Caco-2 (cell line): ENCODE measurements at regions of chr10 and their contacts with region 1.

Region 1: DNA sequence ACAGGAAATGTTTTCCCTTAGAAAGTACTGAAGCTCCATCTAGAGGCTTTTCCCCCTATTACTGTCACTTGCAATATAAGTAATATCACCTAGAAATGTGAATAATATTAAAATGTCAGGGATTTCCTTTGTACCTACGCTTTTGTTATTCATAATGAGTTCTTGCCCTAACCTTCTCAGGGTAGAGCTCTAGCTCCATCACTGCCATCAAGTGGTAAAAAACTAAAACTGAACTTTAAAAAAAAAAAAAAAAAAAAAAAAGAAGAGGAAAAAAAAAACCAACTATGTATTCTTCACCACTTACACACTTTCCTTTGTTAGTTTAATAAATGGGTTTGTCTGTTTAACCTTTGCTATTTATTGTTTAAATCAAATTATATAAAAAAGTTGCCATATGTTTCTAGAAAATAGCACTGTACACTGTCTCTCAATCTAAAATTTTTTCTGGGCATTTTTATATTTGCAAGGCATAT is 49.9 kb downstream of the DNAJC1 start:
- DNase-seq: peak in 1 of 2 experiments; percentile 28
- H3K4me3 ChIP-seq: no peak overlapping the region
- H3K4me3 Mint-ChIP-seq: no peak overlapping the region
- H3K27ac Mint-ChIP-seq: no peak overlapping the region
- H3K4me1 ChIP-seq: no peaks in the 10 kb centered on the region
- H3K4me1 Mint-ChIP-seq: no peaks in the 10 kb centered on the region
- H3K27me3 ChIP-seq: no peaks in the 10 kb centered on the region
- H3K27me3 Mint-ChIP-seq: no peaks in the 10 kb centered on the region
- CTCF ChIP-seq: peak; percentile 41 to 62

Region 2: DNA sequence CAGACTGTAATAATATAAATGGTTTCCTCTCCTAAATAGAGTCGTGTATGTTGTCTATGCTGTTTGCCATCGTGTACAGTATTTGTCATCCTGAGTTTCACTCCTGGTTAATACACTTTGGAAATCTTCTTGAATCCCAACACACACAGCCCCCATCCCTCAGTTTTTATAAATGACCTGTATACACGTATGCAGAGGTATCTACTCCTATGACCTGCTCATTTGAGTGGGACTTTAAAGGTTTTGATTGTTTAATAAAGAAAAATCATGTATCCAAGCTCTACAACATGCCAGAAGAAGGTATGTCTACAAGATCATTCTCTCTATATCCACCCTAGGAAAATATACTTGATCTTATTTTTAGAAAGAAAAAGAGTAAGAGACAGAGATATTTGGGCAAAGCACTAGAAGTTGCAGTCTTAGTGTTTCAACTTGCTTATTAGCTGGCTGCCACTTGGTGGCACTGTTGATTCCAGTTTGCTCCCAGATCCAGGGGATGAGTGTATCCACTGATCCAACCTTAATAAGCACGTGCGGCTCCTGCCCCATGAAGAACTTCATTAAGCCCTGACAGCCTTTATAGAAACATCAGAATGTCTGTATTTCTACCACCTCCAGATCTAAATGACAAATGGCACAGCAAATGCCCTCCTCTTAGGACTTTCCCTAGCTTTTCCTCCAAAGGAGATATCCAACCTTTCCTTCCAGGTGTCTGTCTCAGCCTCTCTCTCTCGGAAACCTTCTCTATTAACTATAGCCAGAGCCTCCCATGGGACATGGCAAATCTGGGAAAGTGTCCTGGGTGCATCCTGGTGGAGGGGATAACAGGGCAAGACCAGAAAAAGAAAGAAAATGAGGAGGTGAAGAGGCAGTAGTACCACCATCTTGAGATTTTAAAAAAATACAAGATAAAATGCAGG is 875.0 kb before region 1 on chr10:
- CTCF ChIA-PET with region 1: no interaction called
- POLR2A ChIA-PET with region 1: no interaction called
- intact Hi-C with region 1: loop called (anchors 10 kb)
- DNase-seq: peak; percentile 78 to 84
- H3K4me3 ChIP-seq: no peak overlapping the region
- H3K4me3 Mint-ChIP-seq: no peak overlapping the region
- H3K27ac Mint-ChIP-seq: peak overlapping the region; percentile 23
- H3K4me1 ChIP-seq: 0 out of 2 replicates have a peak, but pooled peaks cover 6% of the 10 kb centered on the region
- H3K4me1 Mint-ChIP-seq: peaks cover 15% of the 10 kb centered on the region
- H3K27me3 ChIP-seq: no peaks in the 10 kb centered on the region
- H3K27me3 Mint-ChIP-seq: no peaks in the 10 kb centered on the region
- CTCF ChIP-seq: peak; percentile 92 to 97

Region 3: GRCh38 chr10:21242915-21243314 is 710.7 kb before region 1 on chr10:
- CTCF ChIA-PET with region 1: no interaction called
- POLR2A ChIA-PET with region 1: interaction called, 10 read pairs
- intact Hi-C with region 1: no loop called
- DNase-seq: peak; percentile 62 to 71
- H3K4me3 ChIP-seq: no peak overlapping the region
- H3K4me3 Mint-ChIP-seq: peak overlapping the region; percentile 61
- H3K27ac Mint-ChIP-seq: peak overlapping the region; percentile 84
- H3K4me1 ChIP-seq: peaks cover 19% of the 10 kb centered on the region
- H3K4me1 Mint-ChIP-seq: peaks cover 26% of the 10 kb centered on the region
- H3K27me3 ChIP-seq: no peaks in the 10 kb centered on the region
- H3K27me3 Mint-ChIP-seq: no peaks in the 10 kb centered on the region
- CTCF ChIP-seq: no peak

Region 4: GRCh38 chr10:21516242-21517131 is 437.1 kb before region 1 on chr10:
- CTCF ChIA-PET with region 1: interaction called, 3 read pairs
- POLR2A ChIA-PET with region 1: no interaction called
- intact Hi-C with region 1: loop called (anchors 5 kb)
- DNase-seq: peak; percentile 76 to 85
- H3K4me3 ChIP-seq: peak overlapping the region; percentile 71
- H3K4me3 Mint-ChIP-seq: peak overlapping the region; percentile 92
- H3K27ac Mint-ChIP-seq: peak overlapping the region; percentile 80
- H3K4me1 ChIP-seq: peaks cover 47% of the 10 kb centered on the region
- H3K4me1 Mint-ChIP-seq: peaks cover 59% of the 10 kb centered on the region
- H3K27me3 ChIP-seq: no peaks in the 10 kb centered on the region
- H3K27me3 Mint-ChIP-seq: no peaks in the 10 kb centered on the region
- CTCF ChIP-seq: no peak

Region 5: DNA sequence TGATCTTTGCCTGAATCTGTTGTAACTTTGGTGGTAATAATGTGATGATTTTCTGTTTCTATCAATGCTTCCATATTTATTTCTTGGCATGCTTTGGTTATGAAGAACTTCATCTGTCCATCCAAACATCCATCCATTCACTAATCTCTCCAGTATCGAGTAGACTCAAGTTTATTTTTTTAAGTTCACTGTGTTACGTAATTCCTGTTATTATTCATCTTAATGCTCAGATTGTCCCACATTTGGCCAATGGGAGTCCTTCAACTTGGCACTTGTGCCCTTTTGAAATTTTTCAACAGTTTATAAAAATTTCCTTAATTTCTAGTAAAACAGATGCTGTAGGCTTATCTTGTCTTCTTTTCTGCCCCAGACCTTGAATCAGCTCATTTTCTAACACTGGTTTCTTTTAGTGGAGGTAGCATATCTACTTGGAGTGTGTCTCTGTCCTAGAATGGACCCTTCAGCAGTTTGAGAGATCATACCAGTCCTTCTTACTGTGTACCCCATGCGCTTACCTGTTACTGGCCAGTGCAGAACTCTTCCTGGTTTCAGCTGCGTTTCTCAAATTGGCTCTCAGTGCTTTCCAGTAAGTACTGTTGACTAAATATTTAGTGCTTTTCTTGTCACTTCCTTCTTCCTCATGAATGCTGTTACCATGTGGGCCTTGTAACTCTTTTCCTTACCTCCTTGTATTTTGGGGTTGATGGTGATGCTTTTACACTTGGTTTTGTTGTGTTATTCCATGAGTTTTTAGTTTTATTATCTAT is 318.8 kb before region 1 on chr10:
- CTCF ChIA-PET with region 1: no interaction called
- POLR2A ChIA-PET with region 1: no interaction called
- intact Hi-C with region 1: loop called (anchors 10 kb)
- DNase-seq: no peak
- H3K4me3 ChIP-seq: no peak overlapping the region
- H3K4me3 Mint-ChIP-seq: no peak overlapping the region
- H3K27ac Mint-ChIP-seq: no peak overlapping the region
- H3K4me1 ChIP-seq: peaks cover 10% of the 10 kb centered on the region; the same call in 1 of the 2 replicates
- H3K4me1 Mint-ChIP-seq: peaks cover 28% of the 10 kb centered on the region
- H3K27me3 ChIP-seq: no peaks in the 10 kb centered on the region
- H3K27me3 Mint-ChIP-seq: no peaks in the 10 kb centered on the region
- CTCF ChIP-seq: no peak

Region 6: DNA sequence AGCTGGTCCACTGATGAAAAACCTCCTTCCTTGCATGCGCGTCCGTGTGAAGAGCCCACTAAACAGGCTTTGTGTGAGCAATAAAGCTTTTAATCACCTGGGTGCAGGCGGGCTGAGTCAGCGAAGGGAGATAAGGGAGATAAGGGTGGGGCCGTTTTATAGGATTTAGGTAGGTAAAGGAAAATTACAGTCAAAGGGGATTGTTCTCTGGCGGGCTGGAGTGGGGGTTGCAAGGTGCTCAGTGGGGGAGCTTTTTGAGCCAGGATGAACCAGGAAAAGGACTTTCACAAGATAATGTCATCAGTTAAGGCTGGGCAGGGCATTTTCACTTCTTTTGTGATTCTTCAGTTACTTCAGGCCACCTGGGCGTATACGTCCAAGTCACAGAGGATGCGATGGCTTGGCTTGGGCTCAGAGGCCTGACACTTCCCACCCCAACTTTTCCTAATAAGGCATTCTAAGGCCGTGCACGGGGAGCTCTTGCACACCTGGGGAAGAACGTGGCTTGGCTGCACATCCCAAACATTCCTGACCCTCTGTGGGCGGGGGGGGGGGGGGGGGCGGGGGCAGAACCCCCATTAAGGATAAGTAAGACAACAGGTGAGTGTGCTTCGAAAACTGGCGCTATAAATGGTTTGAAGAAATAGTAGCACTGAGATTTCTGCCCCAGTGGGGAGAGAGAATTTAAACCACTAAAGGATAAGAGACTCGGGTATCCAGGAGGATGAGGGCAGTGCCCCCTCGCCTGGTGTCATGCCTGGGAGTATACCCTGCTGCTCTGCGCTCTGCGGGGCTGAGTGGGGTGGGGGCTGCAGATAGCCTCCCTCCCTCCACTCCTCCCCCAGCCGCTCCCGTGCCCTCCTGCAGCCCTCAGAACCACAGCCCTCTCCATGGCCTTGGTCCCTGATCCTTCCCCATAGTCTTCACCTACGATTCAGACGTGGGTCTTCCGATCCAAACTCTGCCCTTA is 202.0 kb before region 1 on chr10:
- CTCF ChIA-PET with region 1: no interaction called
- POLR2A ChIA-PET with region 1: no interaction called
- intact Hi-C with region 1: loop called (anchors 2 kb)
- DNase-seq: peak; percentile 73 to 87
- H3K4me3 ChIP-seq: no peak overlapping the region
- H3K4me3 Mint-ChIP-seq: peak overlapping the region; percentile 53
- H3K27ac Mint-ChIP-seq: peak overlapping the region; percentile 60
- H3K4me1 ChIP-seq: peaks cover 36% of the 10 kb centered on the region
- H3K4me1 Mint-ChIP-seq: peaks cover 27% of the 10 kb centered on the region
- H3K27me3 ChIP-seq: no peaks in the 10 kb centered on the region
- H3K27me3 Mint-ChIP-seq: no peaks in the 10 kb centered on the region
- CTCF ChIP-seq: no peak